Activated B cell treated with CpG ODN at 0.5 μM for 24 hours (primary cell): ENCODE measurements at regions of chr19 and their contacts with region 1.

Region 1: GRCh38 chr19:3557461-3558248 is at the start of gene MFSD12:
- DNase-seq: peak; percentile 94
- ATAC-seq: peak; percentile 86
- H3K4me3 Mint-ChIP-seq: peak within 1 kb of the TSS; percentile 89
- H3K27ac Mint-ChIP-seq: peak within 1 kb of the TSS; percentile 86
- H3K4me1 Mint-ChIP-seq: peaks cover 57% of the 10 kb centered on the region
- H3K27me3 Mint-ChIP-seq: no peaks in the 10 kb centered on the region
- CTCF ChIP-seq: no peak
- total RNA-seq, gene MFSD12: 59.2 and 76.9 TPM in 2 replicates

Region 2: GRCh38 chr19:3403489-3404323 is 153.9 kb before region 1 on chr19:
- CTCF ChIA-PET with region 1: no interaction called
- POLR2A ChIA-PET with region 1: no interaction called
- intact Hi-C with region 1: no loop called
- DNase-seq: no peak
- ATAC-seq: no peak
- H3K4me3 Mint-ChIP-seq: no peak overlapping the region
- H3K27ac Mint-ChIP-seq: no peak overlapping the region
- H3K4me1 Mint-ChIP-seq: no peaks in the 10 kb centered on the region
- H3K27me3 Mint-ChIP-seq: no peaks in the 10 kb centered on the region
- CTCF ChIP-seq: no peak

Region 3: GRCh38 chr19:3606690-3607289 is 49.1 kb after region 1 on chr19 and contains the start of gene TBXA2R:
- CTCF ChIA-PET with region 1: no interaction called
- POLR2A ChIA-PET with region 1: interaction called, 3 read pairs
- intact Hi-C with region 1: loop called (anchors 5 kb)
- DNase-seq: peak; percentile 74
- ATAC-seq: peak; percentile 63
- H3K4me3 Mint-ChIP-seq: peak within 1 kb of the TSS; percentile 65
- H3K27ac Mint-ChIP-seq: no peak within 1 kb of the TSS
- H3K4me1 Mint-ChIP-seq: peaks cover 18% of the 10 kb centered on the region
- H3K27me3 Mint-ChIP-seq: peaks cover 1% of the 10 kb centered on the region
- CTCF ChIP-seq: no peak
- total RNA-seq, gene TBXA2R: 0.39 and 0.47 TPM in 2 replicates

Region 4: DNA sequence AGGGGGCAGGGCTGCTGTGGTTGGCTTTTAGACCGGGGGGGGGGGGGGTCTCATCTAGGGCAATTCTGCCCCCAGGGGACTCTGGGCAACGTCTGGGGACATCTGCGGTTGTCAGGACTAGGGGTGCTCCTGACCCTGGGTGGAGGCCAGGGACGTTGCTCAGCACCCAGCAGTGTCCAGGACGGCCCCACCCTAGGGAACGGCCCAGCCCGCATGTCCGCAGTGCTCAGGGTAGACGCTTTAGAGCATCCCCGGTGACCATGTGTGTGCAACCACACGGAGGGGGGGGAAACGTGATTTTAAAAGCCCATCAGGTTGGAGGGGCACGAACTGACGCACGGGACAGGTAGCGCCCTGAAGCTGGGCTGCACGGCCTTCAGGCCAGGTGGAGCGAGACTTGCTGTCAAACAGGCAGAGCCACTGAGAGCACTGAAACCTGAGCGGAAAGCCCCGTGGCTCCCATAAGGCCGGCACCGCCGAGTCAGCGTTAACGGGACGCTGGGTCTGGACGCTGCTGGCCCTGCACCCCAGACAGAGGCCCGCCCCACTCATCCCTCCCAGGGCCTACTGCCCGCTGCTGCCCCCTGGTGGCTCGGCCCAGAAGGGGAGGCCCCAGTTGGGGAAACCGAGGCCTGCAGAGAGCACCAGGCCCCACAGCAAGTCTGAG is 60.6 kb after region 1 on chr19:
- CTCF ChIA-PET with region 1: no interaction called
- POLR2A ChIA-PET with region 1: no interaction called
- intact Hi-C with region 1: no loop called
- DNase-seq: peak; percentile 65
- ATAC-seq: peak; percentile 81
- H3K4me3 Mint-ChIP-seq: no peak overlapping the region
- H3K27ac Mint-ChIP-seq: no peak overlapping the region
- H3K4me1 Mint-ChIP-seq: peaks cover 14% of the 10 kb centered on the region
- H3K27me3 Mint-ChIP-seq: no peaks in the 10 kb centered on the region
- CTCF ChIP-seq: peak; percentile 34